ENCODE measurements at regions of chr14 and their contacts with region 1.

Region 1: DNA sequence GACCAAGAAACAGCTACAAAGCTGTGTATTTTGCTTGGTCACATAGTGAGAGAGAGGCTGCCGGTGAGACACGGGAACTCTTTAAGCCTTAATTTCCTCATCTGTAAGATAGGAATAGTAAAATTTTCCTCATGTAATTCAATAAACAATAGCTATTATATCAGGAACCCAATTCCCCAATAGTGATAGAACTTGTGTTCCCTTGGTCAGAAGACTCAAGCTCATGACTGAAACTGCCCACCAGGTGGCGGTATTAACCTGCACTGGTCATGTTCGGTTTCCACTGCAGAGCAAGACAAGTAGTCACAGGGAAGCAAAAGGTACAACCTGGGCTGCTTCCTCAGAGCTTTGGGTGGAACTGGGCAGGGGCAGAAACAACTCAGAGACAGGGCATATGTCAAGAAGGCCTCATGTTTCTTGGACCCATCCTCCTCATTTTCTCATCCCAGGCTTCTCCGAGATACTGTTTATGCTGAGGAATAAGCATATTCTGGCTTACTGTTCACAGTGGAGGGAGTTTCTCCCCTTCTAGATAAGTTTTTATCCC is 4.2 kb upstream of the AJUBA start:
- DNase-seq: peak; percentile 79
- H3K4me3 ChIP-seq: no peak overlapping the region; a peak in 1 of 4 replicates
- H3K27ac ChIP-seq: no peak overlapping the region
- H3K4me1 ChIP-seq: peaks cover 0 to 4% of the 10 kb centered on the region in 2 experiments; a peak in 1 of 4 replicates
- H3K27me3 ChIP-seq: no peaks in the 10 kb centered on the region
- CTCF ChIP-seq: peak; percentile 91
- EP300 ChIP-seq: no peak
- RAD21 ChIP-seq: peak; percentile 97

Region 2: DNA sequence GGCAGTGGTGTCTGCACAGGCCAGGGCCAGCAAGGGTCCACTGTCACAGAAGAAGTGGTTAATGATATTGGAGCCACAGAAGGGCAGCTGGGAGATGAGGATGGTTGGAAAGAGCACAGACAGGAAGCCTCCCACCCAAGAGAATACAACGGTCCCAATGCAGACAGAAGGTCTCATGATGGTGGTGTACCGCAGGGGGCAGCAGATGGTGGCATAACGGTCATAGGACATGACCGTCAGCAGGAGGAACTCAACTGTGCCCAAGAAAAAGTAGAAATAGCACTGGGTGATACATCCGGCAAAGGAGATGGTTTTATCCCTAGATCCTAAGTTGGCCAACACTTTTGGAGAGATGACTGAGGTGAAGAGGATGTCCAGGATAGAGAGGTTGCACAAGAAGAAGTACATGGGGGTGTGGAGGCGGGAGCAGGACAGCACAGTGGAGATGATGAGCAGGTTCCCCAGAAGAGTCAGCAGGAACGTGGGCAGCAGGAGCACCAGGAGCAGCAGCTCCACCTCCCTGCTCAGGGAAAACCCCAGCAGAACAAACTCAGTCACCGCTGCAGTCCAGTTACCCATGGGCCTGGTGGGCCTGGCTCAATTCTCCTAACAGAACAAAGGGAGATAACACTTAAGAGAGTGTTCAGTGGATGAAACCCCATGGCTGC is 352.2 kb before region 1 on chr14:
- CTCF ChIA-PET with region 1: no interaction called
- POLR2A ChIA-PET with region 1: no interaction called
- DNase-seq: no peak
- H3K4me3 ChIP-seq: no peak overlapping the region
- H3K27ac ChIP-seq: no peak overlapping the region
- H3K4me1 ChIP-seq: no peaks in the 10 kb centered on the region
- H3K27me3 ChIP-seq: peaks cover 28% of the 10 kb centered on the region; the same call in 1 of the 2 replicates
- CTCF ChIP-seq: no peak
- EP300 ChIP-seq: no peak
- RAD21 ChIP-seq: no peak

Region 3: GRCh38 chr14:22929104-22929847 is 57.3 kb before region 1 on chr14 and contains the start of gene PRMT5:
- CTCF ChIA-PET with region 1: interaction called, 36 read pairs
- POLR2A ChIA-PET with region 1: no interaction called
- DNase-seq: peak; percentile 91
- H3K4me3 ChIP-seq: peak within 1 kb of the TSS; percentile 83 to 84
- H3K27ac ChIP-seq: peak within 1 kb of the TSS; percentile 85 to 89
- H3K4me1 ChIP-seq: peaks cover 9 to 12% of the 10 kb centered on the region in 2 experiments; a peak in 2 of 4 replicates
- H3K27me3 ChIP-seq: no peaks in the 10 kb centered on the region
- CTCF ChIP-seq: no peak
- EP300 ChIP-seq: peak in 1 of 2 experiments; percentile 70; a peak in 1 of 4 replicates
- RAD21 ChIP-seq: no peak
- polyA plus RNA-seq, gene PRMT5: 132 and 174 TPM in 2 replicates

Region 4: DNA sequence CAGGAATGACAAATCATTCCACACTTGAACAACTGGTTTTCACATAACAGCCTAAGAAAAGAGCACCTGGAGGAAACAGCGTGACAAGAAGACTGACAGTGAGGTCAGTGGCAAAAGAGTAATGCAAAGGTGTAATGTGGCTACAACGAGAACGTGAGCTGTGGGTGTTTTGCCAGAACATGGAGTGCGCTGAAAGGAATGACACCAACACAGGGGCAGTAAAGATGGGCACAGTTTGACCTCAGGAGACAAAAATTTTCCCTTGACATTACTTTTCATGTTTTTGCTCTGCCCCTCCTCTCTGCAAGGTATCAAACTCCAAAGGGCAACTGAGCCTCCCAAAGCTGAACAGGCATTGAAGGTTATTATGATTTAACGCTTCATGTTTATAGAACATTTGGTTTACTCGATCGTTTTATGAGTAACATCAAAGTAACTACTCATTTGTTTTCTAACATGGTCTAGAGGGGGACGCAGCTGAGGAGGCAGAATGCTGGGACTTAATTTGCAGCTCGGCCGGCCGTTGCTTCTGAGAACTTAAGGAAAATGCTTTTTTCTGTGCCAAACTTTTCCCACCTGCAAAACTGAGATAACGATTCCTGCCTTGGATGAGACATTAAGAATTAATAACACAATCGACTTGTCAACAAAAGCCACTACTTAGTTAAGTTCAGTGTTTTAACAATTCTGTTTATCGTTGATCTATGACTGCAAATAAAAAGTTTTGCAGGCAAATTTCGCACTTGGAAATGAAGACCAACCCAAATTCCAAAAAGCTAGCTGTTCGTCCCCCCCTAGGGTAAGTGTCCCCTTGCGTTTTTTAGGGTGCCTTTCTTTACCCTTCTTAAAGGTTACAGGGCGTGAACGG is 30.6 kb before region 1 on chr14:
- CTCF ChIA-PET with region 1: interaction called, 16 read pairs
- POLR2A ChIA-PET with region 1: interaction called, 3 read pairs
- DNase-seq: no peak
- H3K4me3 ChIP-seq: peak overlapping the region; percentile 61 to 88
- H3K27ac ChIP-seq: peak overlapping the region; percentile 85 to 86
- H3K4me1 ChIP-seq: peaks cover 4 to 6% of the 10 kb centered on the region in 2 experiments; a peak in 2 of 4 replicates
- H3K27me3 ChIP-seq: no peaks in the 10 kb centered on the region
- CTCF ChIP-seq: no peak
- EP300 ChIP-seq: no peak
- RAD21 ChIP-seq: no peak

Region 5: GRCh38 chr14:23006544-23007419 is 20.2 kb after region 1 on chr14:
- CTCF ChIA-PET with region 1: interaction called, 44 read pairs
- POLR2A ChIA-PET with region 1: interaction called, 4 read pairs
- DNase-seq: peak; percentile 97
- H3K4me3 ChIP-seq: peak overlapping the region; percentile 67 to 68
- H3K27ac ChIP-seq: peak overlapping the region; percentile 81 to 98
- H3K4me1 ChIP-seq: peaks cover 10 to 18% of the 10 kb centered on the region in 2 experiments
- H3K27me3 ChIP-seq: no peaks in the 10 kb centered on the region
- CTCF ChIP-seq: peak; percentile 32
- EP300 ChIP-seq: no peak
- RAD21 ChIP-seq: no peak

Region 6: GRCh38 chr14:23025151-23025814 is 38.7 kb after region 1 on chr14:
- CTCF ChIA-PET with region 1: interaction called, 27 read pairs
- POLR2A ChIA-PET with region 1: no interaction called
- DNase-seq: no peak
- H3K4me3 ChIP-seq: no peak overlapping the region
- H3K27ac ChIP-seq: no peak overlapping the region
- H3K4me1 ChIP-seq: peaks cover 4 to 12% of the 10 kb centered on the region in 2 experiments; a peak in 2 of 4 replicates
- H3K27me3 ChIP-seq: no peaks in the 10 kb centered on the region
- CTCF ChIP-seq: no peak
- EP300 ChIP-seq: no peak
- RAD21 ChIP-seq: no peak

Region 7: DNA sequence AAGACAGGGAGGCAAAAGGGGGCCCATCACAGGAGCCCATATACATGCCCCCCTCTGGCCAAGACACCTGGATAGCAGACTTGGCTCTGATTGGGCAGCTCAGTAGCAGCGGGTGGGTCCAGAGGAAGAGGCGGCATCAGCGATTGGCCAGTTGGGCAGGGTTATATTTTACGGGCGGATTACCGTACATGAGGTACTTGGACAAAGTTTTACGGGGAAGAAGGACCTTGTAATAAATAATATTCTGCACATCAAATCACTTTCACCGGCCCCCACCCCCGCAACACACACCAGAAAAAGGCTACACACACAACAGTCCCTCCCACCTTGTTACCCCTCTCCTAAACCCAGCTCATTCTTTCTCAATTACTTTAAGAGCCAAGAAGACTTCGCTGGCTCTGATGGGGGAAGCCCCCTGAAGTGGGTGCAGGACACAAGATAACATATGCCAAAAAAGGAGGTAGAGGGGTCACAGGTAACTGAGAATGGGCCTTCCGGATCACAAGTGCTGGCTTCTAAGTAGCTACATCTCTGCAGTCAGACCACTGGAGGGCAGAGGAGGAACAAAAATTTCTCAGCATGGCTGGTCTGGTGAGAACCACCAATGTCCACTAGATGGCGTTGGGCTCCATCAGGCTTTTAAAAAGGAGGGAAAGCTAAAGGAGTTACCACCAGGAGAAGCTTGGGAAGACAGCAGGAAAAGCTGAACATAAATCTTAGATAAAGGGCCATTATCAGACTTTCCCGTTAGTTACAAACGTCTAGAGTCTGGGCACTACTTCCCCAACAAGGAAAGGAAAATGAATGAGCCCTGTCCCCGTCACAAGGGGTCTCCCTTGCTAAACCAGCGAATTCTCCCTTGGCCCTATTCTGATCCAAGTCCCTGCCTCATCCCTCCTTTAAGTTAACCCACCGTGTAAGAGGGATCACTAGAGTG is 82.2 kb after region 1 on chr14:
- CTCF ChIA-PET with region 1: interaction called, 1,566 read pairs
- POLR2A ChIA-PET with region 1: interaction called, 5 read pairs
- DNase-seq: peak; percentile 89
- H3K4me3 ChIP-seq: peak overlapping the region in 1 of 2 experiments; percentile 50; a peak in 1 of 4 replicates
- H3K27ac ChIP-seq: peak overlapping the region; percentile 35 to 40; a peak in 3 of 4 replicates
- H3K4me1 ChIP-seq: peaks cover 20 to 35% of the 10 kb centered on the region in 2 experiments
- H3K27me3 ChIP-seq: no peaks in the 10 kb centered on the region
- CTCF ChIP-seq: peak; percentile 99
- EP300 ChIP-seq: no peak
- RAD21 ChIP-seq: peak; percentile 77